ENCODE measurements at regions of chr11 and their contacts with region 1.

Region 1: GRCh38 chr11:17479284-17480214 is 2.9 kb upstream of the ABCC8 start:
- DNase-seq: no peak

Region 2: DNA sequence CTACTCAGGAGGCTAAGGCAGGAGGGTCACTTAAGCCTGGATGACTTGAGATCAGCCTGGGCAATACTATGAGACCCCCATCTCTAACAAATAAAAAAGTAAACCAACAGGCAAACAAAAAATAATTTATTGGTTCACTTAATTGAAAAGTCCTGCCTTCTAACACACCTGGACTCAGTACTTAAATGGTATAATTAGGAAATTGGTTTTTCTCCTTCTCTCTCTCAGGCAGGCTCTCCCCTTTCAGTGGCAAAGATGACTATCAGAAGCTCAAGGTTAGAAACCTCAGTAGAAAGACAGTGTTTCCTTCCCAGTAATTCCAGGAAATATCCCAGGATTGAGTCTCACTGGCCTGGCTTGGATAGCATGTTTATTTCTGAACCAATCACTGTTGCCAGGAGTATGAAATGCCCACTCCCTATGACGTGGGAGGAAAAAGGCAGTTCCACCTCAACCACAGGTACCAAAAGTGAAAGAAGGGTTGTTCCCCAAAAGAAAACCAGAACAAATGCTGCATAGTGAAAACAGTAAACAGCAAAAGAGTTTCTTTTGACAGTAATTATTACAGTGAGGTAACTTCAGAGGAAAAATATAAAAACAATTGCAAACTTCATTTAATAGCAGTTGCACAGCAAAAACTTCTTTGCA is 1066.9 kb before region 1 on chr11:
- intact Hi-C with region 1: loop called in 1 of 2 experiments (anchors 5 kb)
- DNase-seq: no peak

Measured in posterior vena cava (tissue), 2 donors.